Uterus (tissue), 4 donors: ENCODE measurements at regions of chr12 and their contacts with region 1.

Region 1: DNA sequence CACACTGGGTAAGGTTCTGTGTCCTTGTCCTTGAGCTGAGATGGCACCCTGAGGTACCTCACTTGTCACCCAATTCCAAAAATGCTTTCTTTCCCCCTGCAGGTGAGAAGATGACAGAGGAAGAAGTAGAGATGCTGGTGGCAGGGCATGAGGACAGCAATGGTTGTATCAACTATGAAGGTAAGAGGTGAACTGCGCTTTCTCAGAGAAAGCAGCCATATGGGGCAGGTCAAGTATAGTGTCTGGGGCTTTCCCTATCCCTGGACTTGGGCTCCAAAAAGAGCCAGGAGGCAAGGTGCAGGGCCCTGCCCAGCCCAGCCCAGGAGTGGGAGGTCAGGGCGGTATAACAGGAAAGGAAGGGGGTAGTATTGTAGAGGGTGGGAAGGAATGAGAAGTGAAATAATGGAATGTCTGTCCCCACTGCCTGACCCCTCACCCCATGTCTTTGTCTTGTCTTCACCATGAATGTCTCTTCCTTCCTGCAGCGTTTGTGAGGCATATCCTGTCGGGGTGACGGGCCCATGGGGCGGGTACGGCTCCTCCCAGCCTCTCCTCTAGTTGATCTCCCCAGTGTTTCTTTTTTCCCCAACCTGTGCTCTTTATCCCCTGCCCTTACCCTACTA is 2.1 kb downstream of the MYL6 start:
- DNase-seq: no peak
- H3K4me3 ChIP-seq: peak overlapping the region; percentile 89 to 98
- H3K27ac ChIP-seq: peak overlapping the region; percentile 99
- H3K4me1 ChIP-seq: peaks cover 0 to 16% of the 10 kb centered on the region in 2 donors
- H3K27me3 ChIP-seq: no peaks in the 10 kb centered on the region
- CTCF ChIP-seq: no peak
- POLR2A ChIP-seq: no peak

Region 2: GRCh38 chr12:56127888-56128669 is 32.2 kb before region 1 on chr12 and contains the start of gene ESYT1:
- intact Hi-C with region 1: loop called (anchors 5 kb)
- DNase-seq: peak; percentile 98 to 100
- H3K4me3 ChIP-seq: peak within 1 kb of the TSS; percentile 56 to 95
- H3K27ac ChIP-seq: peak within 1 kb of the TSS; percentile 89 to 91
- H3K4me1 ChIP-seq: peaks cover 8 to 10% of the 10 kb centered on the region in 2 donors
- H3K27me3 ChIP-seq: no peaks in the 10 kb centered on the region
- CTCF ChIP-seq: peak in 1 of 4 experiments; percentile 39
- POLR2A ChIP-seq: peak; percentile 97 to 99
- total RNA-seq, gene ESYT1: 98.4 to 203 (median 134) TPM